ENCODE measurements at regions of chr15 and their contacts with region 1.

Region 1: DNA sequence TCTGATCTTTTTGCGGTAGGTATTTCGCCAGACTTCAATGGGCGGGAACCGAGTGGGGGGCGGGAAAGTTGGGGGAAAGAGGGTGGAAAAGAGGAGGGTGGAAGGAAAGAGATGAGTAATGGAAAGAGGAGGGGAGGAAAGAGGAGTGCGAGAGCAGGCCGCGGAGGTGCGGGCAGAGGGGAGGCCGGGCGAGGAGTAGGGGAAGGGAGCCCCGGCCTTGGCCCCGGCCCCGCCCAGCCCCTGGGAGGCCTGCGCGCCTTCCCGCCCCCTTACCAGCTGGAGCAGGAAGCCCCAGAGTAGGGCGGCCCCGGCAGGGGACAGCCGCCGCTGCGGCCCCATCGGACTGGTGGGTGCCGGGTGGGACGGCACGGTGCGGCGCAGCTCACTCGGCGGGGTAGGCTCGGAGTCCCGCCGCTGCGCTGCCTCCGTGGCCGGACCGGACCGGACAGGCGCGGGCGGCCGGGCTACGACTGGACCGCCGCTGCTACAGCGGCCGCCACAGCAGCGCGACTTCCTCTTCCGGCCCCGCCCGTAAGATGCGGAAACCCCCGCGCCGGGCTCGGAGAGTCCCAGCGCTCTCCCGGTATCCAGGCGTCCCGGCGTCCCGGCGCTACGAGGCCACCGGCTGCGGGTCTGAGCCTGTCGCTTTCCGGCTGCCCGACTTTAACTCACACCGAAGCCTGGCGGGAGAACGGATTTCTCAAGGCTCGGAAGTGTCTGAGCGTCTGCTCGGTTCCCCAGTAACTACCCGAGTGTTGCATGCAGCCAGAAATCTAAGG is at the start of gene SPPL2A:
- DNase-seq: peak; percentile 89
- ATAC-seq: peak; percentile 93 to 97
- total RNA-seq, gene SPPL2A: 95.1 to 129 TPM

Region 2: DNA sequence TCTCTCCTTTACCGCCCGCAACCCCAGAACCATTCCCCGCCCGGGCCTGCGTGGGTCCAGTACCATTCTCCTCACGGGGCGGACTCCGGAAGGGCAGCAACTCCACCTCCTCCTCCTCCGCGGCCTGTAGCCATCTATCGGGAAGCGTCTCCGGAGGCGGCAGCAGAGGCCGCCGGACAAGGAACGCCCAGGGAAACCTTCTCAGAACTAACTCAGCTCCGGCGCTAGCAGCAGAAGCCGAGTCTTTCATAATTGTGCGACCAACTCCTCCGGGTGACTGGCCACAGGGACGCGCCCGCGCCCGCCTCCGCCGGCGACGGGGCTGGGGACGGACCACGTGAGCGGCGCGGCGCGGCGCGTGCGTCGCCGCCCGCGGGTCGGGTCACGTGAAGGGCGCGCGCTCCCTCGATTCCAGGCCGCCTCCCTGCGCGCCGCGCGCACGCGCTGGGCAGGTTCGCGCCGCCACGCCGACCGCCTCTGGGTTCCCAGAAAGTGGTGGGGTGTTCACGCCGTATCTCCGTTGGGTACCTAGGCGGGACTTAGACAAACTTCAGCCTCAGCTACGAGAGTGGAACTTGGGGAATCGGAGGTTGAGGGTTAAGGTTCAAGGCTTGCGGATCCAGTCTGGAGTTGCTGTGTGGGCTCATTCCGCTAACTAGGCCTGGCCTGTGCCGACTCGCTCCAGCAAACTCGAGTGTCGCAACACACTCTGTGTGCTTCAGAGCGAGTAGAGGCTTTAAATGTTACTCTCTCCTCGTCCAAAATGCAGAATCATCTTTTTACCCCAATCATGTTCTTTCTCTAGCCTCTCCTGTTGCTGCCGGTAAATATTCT is 78.7 kb before region 1 on chr15 and contains the start of gene TRPM7:
- intact Hi-C with region 1: loop called (anchors 5 to 10 kb)
- DNase-seq: peak; percentile 92
- ATAC-seq: peak; percentile 98
- total RNA-seq, gene TRPM7: 21.1 to 29.4 TPM

Region 3: DNA sequence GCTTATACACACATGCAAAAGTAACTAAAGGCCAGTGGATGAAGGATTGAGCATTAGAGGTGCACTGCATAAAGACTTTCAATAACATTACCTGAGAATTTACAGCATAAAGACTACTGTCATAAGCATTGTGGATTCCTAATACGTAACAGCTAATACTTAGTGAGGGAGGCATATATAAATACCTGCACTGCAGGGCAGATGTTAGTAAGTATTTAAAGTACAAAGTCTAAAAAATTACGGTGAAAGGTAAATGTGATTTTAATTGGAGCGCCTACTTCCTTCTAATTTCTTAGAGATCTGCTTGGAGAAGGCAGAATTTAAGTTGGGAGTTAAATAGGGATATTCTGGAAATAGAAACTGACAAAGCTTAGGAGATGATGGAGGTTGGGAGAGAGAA is 53.4 kb before region 1 on chr15:
- intact Hi-C with region 1: loop called in 1 of 2 experiments (anchors 5 kb)
- DNase-seq: no peak
- ATAC-seq: no peak

Region 4: DNA sequence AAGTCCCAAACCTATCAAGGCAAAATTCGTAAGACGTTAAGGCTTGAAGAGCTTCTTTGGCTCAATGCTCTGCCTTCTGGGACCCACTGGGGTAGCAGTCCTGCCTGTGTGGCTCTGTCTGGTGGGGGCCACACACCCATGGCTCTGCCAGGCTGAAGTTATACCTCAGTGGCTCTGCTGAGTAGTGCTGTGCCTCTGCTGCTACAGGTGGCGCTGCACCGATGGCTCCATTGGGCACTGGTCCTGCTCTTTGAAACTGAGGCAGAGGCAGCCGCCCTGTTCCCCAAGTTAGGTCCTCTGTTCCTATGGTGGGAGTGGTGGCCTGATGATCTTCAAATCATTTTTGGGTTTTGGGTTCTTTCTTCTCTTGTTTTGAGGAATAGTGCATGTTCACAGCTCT is 75.1 kb after region 1 on chr15:
- intact Hi-C with region 1: no loop called
- DNase-seq: no peak
- ATAC-seq: no peak

Measured in left cardiac atrium (tissue), 4 donors.